ENCODE measurements at regions of chr19 and their contacts with region 1.

Region 1: DNA sequence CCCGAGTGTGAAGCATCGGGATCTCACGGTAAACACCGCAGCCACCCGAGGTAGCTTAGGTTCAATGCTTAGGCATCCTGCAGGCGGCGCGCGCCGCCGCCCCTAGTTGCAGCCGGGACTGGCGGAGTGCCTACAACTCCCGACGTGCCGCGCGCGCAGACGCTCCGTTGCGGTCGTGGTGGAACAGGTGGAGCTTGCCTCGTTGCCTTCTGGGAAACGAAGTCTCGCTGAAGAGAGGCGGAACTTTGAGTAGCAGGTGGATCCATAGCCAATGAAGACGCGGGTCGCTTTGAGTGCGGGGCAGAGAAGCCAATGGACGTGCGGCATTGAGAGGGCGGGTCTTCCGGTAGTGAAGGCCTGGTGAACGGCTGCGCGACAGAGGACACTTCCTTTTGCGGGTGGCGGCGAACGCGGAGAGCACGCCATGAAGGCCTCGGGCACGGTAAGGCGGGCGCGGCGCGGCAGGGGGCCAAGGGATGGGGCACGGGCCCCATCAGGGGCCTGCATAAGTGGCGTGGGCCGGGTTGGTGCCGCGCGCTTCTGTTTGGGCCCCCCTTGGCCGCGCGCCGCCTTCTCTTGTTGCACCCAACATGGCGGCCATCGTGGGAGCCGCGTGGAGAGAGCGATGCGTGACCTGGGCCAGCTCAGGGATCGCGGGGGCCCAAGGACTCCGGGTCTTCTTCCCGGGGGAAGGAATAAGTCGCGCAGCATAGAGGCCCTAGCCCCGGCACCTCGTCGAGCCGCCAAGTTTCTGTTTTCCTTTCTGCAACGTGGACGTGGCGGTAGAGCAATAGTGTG is at the start of gene RPL18A:
- DNase-seq: peak; percentile 98
- CTCF ChIP-seq: peak; percentile 82

Region 2: GRCh38 chr19:17932485-17933338 is 73.0 kb after region 1 on chr19 and contains the start of gene CCDC124:
- in situ Hi-C with region 1: loop called (anchors 10 kb)
- DNase-seq: peak; percentile 94
- CTCF ChIP-seq: peak; percentile 96

Measured in GM13976 (cell line).